ENCODE measurements at regions of chr10 and their contacts with region 1.

Region 1: DNA sequence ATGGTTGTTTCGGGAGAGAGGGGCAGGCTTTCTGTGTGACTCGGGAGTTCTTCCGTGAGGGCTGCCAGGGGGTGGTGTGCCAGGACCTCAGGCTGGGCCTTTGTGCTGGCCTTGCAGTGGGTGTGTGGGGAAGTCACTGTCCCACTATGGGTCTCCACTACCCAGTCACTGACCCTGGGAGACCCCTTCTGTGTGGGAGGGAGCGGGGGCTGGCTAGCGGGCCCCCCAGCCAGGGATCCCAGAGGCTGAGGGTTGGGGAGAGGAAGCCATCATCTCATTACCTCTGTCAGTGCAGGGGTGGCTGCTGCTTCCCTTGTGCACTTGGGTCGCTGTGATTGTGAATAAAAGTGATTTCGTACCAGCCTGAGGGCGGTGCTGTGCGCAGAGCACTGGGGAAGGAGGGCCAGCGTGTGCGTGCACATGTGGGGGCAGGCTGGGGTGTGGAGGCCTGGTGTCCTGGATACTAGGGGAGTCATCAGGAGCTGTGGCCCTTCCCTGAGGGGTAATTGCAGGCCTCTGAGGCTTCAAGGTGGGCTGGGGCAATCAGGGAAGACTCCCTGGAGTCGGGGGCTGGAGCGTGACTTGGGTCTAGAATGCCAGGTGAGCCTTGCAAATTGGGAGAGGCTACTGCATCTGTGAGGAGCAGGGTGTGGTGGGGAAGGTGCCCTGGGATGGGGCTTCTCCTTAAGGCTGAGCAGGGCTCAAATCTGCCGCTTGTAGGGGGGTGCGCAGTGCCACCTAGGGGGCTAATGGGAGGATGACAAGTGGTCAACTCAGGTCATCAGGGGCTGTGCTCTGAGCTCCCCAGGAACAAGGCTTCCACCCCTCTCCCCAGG is 98.9 kb downstream of the NEURL1 start:
- DNase-seq: peak; percentile 63 to 77
- H3K4me3 ChIP-seq: no peak overlapping the region
- H3K4me3 Mint-ChIP-seq: no peak overlapping the region
- H3K27ac Mint-ChIP-seq: no peak overlapping the region
- H3K4me1 ChIP-seq: no peaks in the 10 kb centered on the region
- H3K4me1 Mint-ChIP-seq: no peaks in the 10 kb centered on the region
- H3K27me3 ChIP-seq: no peaks in the 10 kb centered on the region
- H3K27me3 Mint-ChIP-seq: no peaks in the 10 kb centered on the region
- CTCF ChIP-seq: peak; percentile 89 to 92

Region 2: DNA sequence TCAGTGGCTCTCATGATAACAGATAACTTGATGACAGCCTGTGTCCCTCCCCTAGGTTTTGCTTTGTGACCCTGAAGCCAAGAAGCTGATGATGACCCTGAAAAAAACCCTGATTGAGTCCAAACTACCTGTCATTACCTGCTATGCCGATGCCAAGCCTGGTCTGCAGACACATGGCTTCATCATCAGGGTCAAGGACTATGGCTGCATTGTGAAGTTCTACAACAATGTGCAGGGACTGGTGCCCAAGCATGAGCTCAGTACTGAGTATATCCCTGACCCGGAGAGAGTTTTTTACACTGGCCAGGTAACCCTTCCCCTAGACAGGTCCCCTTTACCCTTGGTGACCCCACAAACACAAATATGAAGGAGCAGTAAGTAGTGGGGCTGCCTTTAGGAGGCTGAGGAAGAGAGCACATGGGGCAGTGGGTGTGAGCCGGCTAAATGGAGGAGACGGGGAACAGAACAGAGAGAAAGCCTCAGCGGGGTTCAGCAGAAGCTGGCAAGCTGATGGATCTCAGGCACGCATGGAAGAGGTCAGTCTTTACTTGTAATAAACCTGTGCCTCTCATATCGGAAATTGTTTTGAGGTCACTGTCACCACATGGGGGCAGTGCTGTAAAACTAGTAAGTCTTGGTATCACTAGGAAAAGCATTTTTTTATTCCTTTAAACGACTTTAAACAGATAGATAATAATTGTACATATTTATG is 175.8 kb before region 1 on chr10:
- CTCF ChIA-PET with region 1: interaction called, 9 read pairs
- POLR2A ChIA-PET with region 1: no interaction called
- intact Hi-C with region 1: loop called (anchors 1 kb)
- DNase-seq: peak; percentile 59 to 60
- H3K4me3 ChIP-seq: no peak overlapping the region
- H3K4me3 Mint-ChIP-seq: no peak overlapping the region
- H3K27ac Mint-ChIP-seq: no peak overlapping the region
- H3K4me1 ChIP-seq: no peaks in the 10 kb centered on the region
- H3K4me1 Mint-ChIP-seq: no peaks in the 10 kb centered on the region
- H3K27me3 ChIP-seq: no peaks in the 10 kb centered on the region
- H3K27me3 Mint-ChIP-seq: no peaks in the 10 kb centered on the region
- CTCF ChIP-seq: peak; percentile 40 to 53

Region 3: DNA sequence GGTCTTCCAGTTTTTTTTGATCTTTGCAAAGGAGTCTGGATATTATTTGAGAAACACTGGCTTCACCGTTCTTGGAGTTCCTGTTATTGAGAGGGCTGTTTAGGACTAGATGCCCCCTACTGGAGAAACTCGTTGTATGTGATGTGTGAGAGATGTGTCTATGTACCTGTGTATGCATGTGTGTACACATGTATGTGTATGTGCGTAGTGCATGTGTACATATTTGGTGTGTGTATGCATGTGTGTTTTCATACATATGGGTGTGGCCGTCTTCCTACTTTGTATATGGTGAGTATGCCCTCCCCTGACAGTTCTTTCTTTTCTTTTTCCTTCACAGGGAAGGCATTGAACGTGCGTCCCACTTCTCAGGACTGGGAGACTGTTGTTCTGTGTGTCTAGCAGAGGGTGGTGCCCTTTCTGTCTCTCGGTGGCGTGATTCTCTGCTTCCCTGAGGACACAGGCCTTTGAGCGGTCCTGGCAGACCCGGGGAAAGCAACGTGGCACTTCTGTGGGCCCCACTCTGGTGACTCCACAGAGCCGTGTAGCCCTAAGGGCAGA is 110.4 kb before region 1 on chr10:
- CTCF ChIA-PET with region 1: interaction called, 4 read pairs
- POLR2A ChIA-PET with region 1: no interaction called
- intact Hi-C with region 1: loop called (anchors 5 kb)
- DNase-seq: peak in 1 of 2 experiments; percentile 57
- H3K4me3 ChIP-seq: no peak overlapping the region
- H3K4me3 Mint-ChIP-seq: no peak overlapping the region
- H3K27ac Mint-ChIP-seq: no peak overlapping the region
- H3K4me1 ChIP-seq: no peaks in the 10 kb centered on the region
- H3K4me1 Mint-ChIP-seq: no peaks in the 10 kb centered on the region
- H3K27me3 ChIP-seq: no peaks in the 10 kb centered on the region
- H3K27me3 Mint-ChIP-seq: no peaks in the 10 kb centered on the region
- CTCF ChIP-seq: peak; percentile 62 to 72

Region 4: GRCh38 chr10:103507235-103508191 is 84.9 kb before region 1 on chr10:
- CTCF ChIA-PET with region 1: interaction called, 4 read pairs
- POLR2A ChIA-PET with region 1: no interaction called
- intact Hi-C with region 1: loop called (anchors 5 kb)
- DNase-seq: peak; percentile 38 to 88
- H3K4me3 ChIP-seq: no peak overlapping the region
- H3K4me3 Mint-ChIP-seq: no peak overlapping the region
- H3K27ac Mint-ChIP-seq: no peak overlapping the region
- H3K4me1 ChIP-seq: peaks cover 16% of the 10 kb centered on the region
- H3K4me1 Mint-ChIP-seq: peaks cover 18% of the 10 kb centered on the region
- H3K27me3 ChIP-seq: no peaks in the 10 kb centered on the region
- H3K27me3 Mint-ChIP-seq: peaks cover under 1% of the 10 kb centered on the region
- CTCF ChIP-seq: peak in 1 of 2 experiments; percentile 38